ENCODE measurements at regions of chr1 and their contacts with region 1.

Region 1: DNA sequence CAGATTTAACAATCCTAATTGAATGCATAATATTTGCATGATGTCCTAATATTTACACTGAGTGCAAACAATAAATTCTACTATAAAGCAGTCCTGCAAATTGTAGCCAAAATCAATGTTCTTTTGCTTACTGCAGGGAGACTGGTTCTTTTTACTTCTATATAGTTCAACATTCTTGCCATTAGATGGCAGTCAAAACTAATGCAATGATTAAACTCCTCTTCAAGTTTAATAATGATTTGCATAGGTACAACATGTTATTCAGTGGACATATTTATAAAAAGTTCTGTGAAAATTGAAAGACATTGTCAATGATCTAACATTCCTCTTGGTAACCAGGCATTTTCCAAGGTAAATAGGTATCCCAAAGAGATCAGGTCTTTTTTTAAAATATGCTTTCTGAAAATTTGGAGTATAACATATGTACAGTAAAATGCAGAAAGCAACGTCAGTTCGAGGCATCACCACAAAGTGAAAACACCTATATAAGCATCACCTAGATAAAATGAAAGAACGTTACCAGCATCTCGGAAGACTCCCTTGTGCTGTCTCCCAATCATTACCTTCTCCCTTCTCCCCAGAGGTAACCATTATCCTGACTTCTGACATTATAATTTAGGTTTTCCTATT is 9.8 kb upstream of the FNBP1L start:
- DNase-seq: no peak
- H3K4me3 ChIP-seq: no peak overlapping the region
- H3K27ac ChIP-seq: no peak overlapping the region
- H3K4me1 ChIP-seq: no peaks in the 10 kb centered on the region
- H3K27me3 ChIP-seq: no peaks in the 10 kb centered on the region
- CTCF ChIP-seq: peak; percentile 52 to 73 (median 62)

Region 2: DNA sequence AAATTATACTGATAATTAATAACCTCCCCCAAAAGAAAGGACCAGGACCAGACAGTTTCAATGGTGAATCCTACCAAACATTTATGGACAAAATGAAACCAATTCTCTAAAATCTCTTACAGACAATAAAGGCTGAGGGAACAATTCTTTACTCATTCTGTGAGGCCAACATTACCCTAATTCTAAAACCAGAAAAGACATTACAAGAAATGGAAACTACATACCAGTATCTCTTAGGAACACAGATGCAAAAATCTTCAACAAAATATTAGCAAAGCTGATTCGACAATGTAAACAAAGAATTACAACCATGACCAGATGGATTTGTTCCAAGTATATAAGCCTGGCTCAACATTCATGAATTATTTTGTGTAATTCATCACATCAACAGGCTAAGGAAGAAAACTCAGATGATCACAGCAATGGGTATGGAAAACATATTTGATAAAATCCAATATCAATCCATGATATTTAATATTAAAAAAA is 266.5 kb before region 1 on chr1:
- intact Hi-C with region 1: no loop called
- DNase-seq: no peak
- H3K4me3 ChIP-seq: no peak overlapping the region
- H3K27ac ChIP-seq: no peak overlapping the region
- H3K4me1 ChIP-seq: peaks cover 0 to 2% of the 10 kb centered on the region in 2 donors
- H3K27me3 ChIP-seq: no peaks in the 10 kb centered on the region
- CTCF ChIP-seq: no peak

Region 3: GRCh38 chr1:93304716-93305138 is 133.4 kb before region 1 on chr1:
- intact Hi-C with region 1: loop called (anchors 10 kb)
- DNase-seq: peak in 1 of 2 donors; percentile 69
- H3K4me3 ChIP-seq: no peak overlapping the region
- H3K27ac ChIP-seq: no peak overlapping the region
- H3K4me1 ChIP-seq: no peaks in the 10 kb centered on the region
- H3K27me3 ChIP-seq: no peaks in the 10 kb centered on the region
- CTCF ChIP-seq: peak; percentile 39 to 90 (median 84)

Region 4: DNA sequence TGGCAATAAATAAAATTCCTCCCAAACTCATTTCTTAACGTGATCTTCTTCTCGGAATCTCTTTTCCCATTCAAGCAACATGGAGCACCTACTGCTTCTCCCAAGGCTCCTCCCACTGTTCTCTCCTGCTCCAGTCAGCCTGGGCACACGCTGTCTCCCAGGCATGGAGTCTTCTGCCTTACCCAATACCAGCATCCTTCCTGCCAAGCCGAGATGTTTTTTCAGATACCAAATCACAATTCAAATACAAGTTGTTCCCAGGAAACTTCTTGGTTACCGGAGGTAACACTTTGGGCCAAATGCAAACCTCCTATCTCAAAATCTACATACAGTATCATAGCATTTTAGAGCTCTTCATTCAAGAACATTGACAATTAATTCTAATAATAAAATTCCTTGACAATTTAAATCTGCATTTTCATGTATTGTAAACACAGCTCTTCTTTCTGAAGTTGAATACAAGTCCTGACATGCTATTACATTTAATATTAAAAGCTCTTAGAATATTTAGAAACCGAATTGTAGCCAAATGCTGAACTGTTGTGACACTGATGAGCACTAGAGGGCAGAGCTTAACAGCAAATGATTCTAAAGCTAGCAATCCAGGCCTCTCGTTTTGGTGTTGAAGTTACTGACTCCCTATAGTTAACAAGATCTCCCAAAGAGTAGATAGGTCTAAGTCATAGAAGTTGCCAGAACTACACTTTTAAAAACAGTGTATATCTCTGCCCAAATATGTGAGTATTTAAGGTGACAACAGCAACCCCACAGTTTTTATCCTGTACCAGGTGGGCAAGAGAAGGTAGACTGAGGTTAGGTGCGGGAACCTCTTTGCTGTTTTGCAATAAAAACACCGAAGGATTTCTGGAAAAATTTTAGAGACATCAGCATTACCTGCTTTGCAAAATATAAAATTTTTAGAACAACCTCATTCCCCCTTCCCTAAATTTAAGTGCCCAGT is 191.3 kb after region 1 on chr1:
- intact Hi-C with region 1: loop called (anchors 5 kb)
- DNase-seq: no peak
- H3K4me3 ChIP-seq: no peak overlapping the region
- H3K27ac ChIP-seq: peak overlapping the region in 1 of 2 donors; percentile 44
- H3K4me1 ChIP-seq: peaks cover 0 to 19% of the 10 kb centered on the region in 2 donors
- H3K27me3 ChIP-seq: no peaks in the 10 kb centered on the region
- CTCF ChIP-seq: peak; percentile 69 to 87 (median 82)

Region 5: GRCh38 chr1:93814059-93814794 is 376.1 kb after region 1 on chr1:
- intact Hi-C with region 1: loop called (anchors 2 kb)
- DNase-seq: peak in 1 of 2 donors; percentile 82
- H3K4me3 ChIP-seq: no peak overlapping the region
- H3K27ac ChIP-seq: no peak overlapping the region
- H3K4me1 ChIP-seq: peaks cover 0 to 11% of the 10 kb centered on the region in 2 donors
- H3K27me3 ChIP-seq: no peaks in the 10 kb centered on the region
- CTCF ChIP-seq: peak; percentile 95 to 96 (median 95)

Measured in ascending aorta (tissue), 2 donors.